Calu3 (cell line): ENCODE measurements at regions of chr7 and their contacts with region 1.

Region 1: GRCh38 chr7:69211739-69212138 is 386.5 kb upstream of the AUTS2 start:
- DNase-seq: no peak
- H3K4me3 Mint-ChIP-seq: no peak overlapping the region
- H3K27ac Mint-ChIP-seq: no peak overlapping the region
- H3K4me1 Mint-ChIP-seq: no peaks in the 10 kb centered on the region
- H3K27me3 Mint-ChIP-seq: no peaks in the 10 kb centered on the region
- CTCF ChIP-seq: no peak

Region 2: GRCh38 chr7:68461430-68461829 is 750.3 kb before region 1 on chr7:
- CTCF ChIA-PET with region 1: interaction called, 21 read pairs
- intact Hi-C with region 1: no loop called
- DNase-seq: no peak
- H3K4me3 Mint-ChIP-seq: no peak overlapping the region
- H3K27ac Mint-ChIP-seq: no peak overlapping the region
- H3K4me1 Mint-ChIP-seq: no peaks in the 10 kb centered on the region
- H3K27me3 Mint-ChIP-seq: no peaks in the 10 kb centered on the region
- CTCF ChIP-seq: no peak

Region 3: DNA sequence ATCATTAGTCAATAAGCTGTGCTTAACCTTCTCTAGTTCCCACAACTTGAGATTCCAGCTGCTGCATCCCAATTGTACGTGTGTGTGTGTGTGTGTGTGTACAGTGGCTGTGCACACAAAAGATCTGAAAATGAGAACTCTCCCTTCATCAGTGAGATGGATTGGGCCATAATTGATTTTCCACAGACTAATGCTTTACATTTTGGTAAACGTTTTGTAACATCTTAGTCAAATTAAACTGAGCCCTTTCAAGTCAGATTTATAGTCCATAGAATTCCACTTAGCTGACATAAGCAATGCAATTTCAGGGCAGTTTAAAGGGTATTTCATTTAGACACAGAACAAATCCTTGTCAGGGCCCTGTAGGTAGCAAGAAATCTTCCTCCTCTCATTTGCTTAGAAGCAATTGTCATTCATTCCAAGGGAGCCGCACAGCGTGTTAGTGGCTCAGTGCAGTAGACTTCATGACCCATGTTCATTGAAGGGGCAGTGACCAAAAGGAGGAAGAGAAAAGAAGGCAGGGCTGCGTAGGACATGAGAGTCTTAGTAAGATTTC is 737.0 kb before region 1 on chr7:
- CTCF ChIA-PET with region 1: no interaction called
- intact Hi-C with region 1: no loop called
- DNase-seq: no peak
- H3K4me3 Mint-ChIP-seq: no peak overlapping the region
- H3K27ac Mint-ChIP-seq: no peak overlapping the region
- H3K4me1 Mint-ChIP-seq: no peaks in the 10 kb centered on the region
- H3K27me3 Mint-ChIP-seq: no peaks in the 10 kb centered on the region
- CTCF ChIP-seq: no peak

Region 4: GRCh38 chr7:69246758-69247157 is 35.0 kb after region 1 on chr7:
- CTCF ChIA-PET with region 1: no interaction called
- intact Hi-C with region 1: no loop called
- DNase-seq: no peak
- H3K4me3 Mint-ChIP-seq: no peak overlapping the region
- H3K27ac Mint-ChIP-seq: no peak overlapping the region
- H3K4me1 Mint-ChIP-seq: no peaks in the 10 kb centered on the region
- H3K27me3 Mint-ChIP-seq: no peaks in the 10 kb centered on the region
- CTCF ChIP-seq: no peak